ENCODE measurements at regions of chrX and their contacts with region 1.

Region 1: GRCh38 chrX:94114362-94114761 is 440.4 kb downstream of the FAM133A start:
- DNase-seq: no peak
- ATAC-seq: no peak

Region 2: DNA sequence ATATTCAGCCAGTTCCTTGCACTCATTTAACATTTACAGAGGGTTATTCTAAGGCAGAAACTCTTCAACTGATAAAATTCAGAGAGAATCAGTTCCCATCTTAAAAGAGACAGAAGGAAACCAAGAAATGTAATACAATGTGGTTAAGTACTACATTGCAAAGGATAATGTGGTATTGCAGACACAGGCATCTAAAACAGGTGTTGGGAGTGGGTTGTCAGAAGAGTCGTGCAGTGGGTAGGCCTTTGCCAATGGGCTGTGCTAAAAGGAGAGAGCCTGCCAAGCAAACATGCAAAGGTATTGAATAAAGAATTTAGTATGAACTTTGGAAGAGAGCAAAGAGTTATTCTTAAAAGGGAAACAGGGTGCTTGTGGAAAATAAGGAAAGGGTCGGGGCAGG is 1525.9 kb after region 1 on chrX:
- intact Hi-C with region 1: loop called (anchors 10 kb)
- DNase-seq: no peak
- ATAC-seq: no peak

Measured in sciatic nerve (tissue), 2 donors.